ENCODE measurements at regions of chr3 and their contacts with region 1.

Region 1: GRCh38 chr3:98556164-98557130 is 24.7 kb downstream of the GPR15 start:
- DNase-seq: peak; percentile 95
- ATAC-seq: peak; percentile 77
- H3K4me3 Mint-ChIP-seq: peak overlapping the region; percentile 78
- H3K27ac Mint-ChIP-seq: peak overlapping the region; percentile 98
- H3K4me1 Mint-ChIP-seq: peaks cover 84% of the 10 kb centered on the region
- H3K27me3 Mint-ChIP-seq: no peaks in the 10 kb centered on the region

Region 2: DNA sequence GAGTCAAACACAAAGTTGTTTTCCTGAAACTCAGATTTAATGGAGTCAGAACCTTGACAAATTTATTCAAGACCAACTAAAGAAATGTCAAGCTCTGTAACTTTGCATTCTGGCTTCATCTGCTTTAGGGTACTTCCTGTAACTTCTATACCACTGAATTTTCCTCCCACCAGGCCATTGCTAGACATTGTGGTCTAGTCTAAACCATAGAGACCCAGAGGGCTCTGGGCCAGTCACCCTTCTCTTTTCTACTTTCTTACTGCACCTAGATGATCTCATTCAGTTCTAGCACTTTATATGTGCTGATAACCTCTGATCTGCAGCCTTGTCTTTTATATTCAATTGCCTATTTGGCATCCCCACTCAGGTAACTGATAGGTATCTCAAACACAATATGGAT is 96.2 kb before region 1 on chr3:
- CTCF ChIA-PET with region 1: no interaction called
- DNase-seq: no peak
- ATAC-seq: peak; percentile 47
- H3K4me3 Mint-ChIP-seq: no peak overlapping the region
- H3K27ac Mint-ChIP-seq: no peak overlapping the region
- H3K4me1 Mint-ChIP-seq: peaks cover 7% of the 10 kb centered on the region
- H3K27me3 Mint-ChIP-seq: no peaks in the 10 kb centered on the region

Region 3: DNA sequence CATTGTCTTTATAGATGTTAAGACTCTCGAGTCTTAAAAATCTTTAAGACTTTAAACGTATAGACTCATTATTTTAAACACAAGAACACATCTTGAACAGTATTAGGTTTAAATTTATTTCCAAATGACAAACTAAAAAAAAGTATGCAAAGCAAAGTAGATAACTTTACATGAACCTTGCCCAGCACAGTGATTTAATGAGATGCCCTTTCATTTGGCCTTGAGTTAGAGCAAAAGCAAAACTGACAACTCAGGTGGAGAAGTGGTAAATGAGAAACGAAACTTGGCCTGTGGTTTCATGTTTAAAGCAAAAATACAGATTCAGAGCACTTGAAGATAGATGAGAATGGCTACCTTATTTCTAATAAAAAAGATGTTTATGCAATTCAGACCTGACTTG is 16.1 kb before region 1 on chr3:
- CTCF ChIA-PET with region 1: interaction called, 16 read pairs
- DNase-seq: no peak
- ATAC-seq: peak; percentile 53
- H3K4me3 Mint-ChIP-seq: peak overlapping the region; percentile 52
- H3K27ac Mint-ChIP-seq: peak overlapping the region; percentile 94
- H3K4me1 Mint-ChIP-seq: peaks cover 73% of the 10 kb centered on the region
- H3K27me3 Mint-ChIP-seq: no peaks in the 10 kb centered on the region

Region 4: DNA sequence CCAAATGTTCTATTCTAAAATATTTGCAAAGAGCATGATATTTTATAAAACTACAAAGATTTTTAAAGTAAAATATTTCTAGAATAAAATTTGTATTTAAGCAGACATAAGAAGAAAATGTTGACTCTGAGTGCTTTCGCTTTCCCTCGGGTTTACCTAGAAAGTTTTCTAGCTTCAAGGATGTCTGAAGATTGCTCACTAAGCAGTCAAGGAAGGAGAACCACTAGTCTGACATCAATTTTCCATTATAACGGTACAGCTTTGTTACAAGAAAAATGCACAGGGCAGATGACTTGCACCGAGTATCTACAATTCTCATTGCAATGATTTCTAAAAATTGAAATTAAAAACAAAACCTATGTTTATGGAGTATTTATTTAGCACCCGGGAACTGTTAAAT is 10.5 kb before region 1 on chr3:
- CTCF ChIA-PET with region 1: interaction called, 16 read pairs
- DNase-seq: no peak
- ATAC-seq: peak; percentile 89
- H3K4me3 Mint-ChIP-seq: peak overlapping the region; percentile 65
- H3K27ac Mint-ChIP-seq: peak overlapping the region; percentile 98
- H3K4me1 Mint-ChIP-seq: peaks cover 73% of the 10 kb centered on the region
- H3K27me3 Mint-ChIP-seq: no peaks in the 10 kb centered on the region

Region 5: GRCh38 chr3:98573181-98573728 is 16.8 kb after region 1 on chr3:
- CTCF ChIA-PET with region 1: interaction called, 11 read pairs
- DNase-seq: no peak
- ATAC-seq: peak; percentile 59
- H3K4me3 Mint-ChIP-seq: peak overlapping the region; percentile 67
- H3K27ac Mint-ChIP-seq: peak overlapping the region; percentile 93
- H3K4me1 Mint-ChIP-seq: peaks cover 68% of the 10 kb centered on the region
- H3K27me3 Mint-ChIP-seq: no peaks in the 10 kb centered on the region

Measured in activated CD8-positive, alpha-beta memory T cell treated with anti-CD3 and anti-CD28 coated beads, Interleukin-2, amount 10 ng/mL, durations not matched to agents 7 days and 5 days (primary cell).